ENCODE measurements at regions of chr17 and their contacts with region 1.

Region 1: DNA sequence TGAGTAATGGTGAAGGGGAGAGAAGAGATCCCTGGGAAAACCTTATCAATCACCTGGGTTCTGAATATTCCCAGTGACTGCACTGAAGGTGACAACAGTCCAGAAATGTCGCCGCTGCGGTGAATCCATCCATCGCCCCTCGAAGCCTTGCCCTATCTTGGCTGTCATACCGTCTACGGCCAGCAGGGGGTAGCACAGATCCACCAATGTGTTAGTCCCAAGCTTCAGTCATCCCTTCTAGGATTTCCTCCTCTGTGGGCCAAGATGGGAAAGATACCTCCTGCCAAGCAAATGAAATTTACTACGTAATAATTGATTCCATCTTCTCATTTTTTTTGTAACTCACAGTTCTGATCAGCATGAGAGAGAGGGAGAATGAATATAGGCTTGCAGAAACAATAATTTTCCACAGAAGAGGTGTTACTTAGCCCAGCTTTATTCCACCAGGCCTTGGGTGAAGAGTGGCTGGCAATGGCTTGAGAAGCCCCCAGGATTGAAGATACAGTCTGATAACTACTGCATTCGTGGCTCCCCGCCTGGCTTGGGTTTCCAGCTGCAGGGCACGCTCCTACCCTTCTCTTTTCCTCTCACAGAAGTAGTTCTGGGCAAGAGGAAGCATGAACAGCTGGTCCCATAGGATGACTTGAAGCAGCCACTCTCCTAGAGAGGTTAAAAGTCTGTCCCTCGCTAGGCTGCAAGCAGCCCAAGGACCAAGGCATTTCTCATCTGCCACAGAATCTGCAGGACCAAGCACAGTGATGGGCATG is 2.6 kb upstream of the FMNL1 start:
- DNase-seq: peak; percentile 85 to 87
- ATAC-seq: peak; percentile 61 to 82
- H3K4me3 ChIP-seq: no peak overlapping the region
- H3K27ac ChIP-seq: peak overlapping the region; percentile 97
- H3K4me1 ChIP-seq: peaks cover 37% of the 10 kb centered on the region
- CTCF ChIP-seq: peak; percentile 99
- EP300 ChIP-seq: no peak
- POLR2A ChIP-seq: no peak
- RAD21 ChIP-seq: peak; percentile 99 to 100

Region 2: DNA sequence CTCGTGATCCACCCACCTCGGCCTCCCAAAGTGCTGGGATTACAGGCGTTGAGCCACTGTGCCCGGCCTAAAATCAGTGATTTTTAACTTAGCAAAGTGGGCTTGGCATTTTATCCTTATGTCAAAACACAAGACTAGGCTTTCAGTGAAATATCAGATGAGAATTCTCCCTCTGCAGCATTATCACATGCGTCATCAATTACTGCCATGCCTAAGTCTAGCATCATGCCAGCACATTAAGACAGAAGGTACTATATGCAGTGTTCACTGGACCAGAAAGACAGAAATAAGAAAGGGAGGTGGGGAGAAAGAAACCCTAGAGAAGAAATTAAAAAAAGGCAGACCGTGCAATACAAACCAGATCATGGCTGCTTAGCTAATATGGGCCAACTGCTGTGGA is 745.7 kb before region 1 on chr17:
- CTCF ChIA-PET with region 1: no interaction called
- POLR2A ChIA-PET with region 1: no interaction called
- DNase-seq: no peak
- ATAC-seq: no peak
- H3K4me3 ChIP-seq: no peak overlapping the region
- H3K27ac ChIP-seq: no peak overlapping the region
- H3K4me1 ChIP-seq: no peaks in the 10 kb centered on the region
- CTCF ChIP-seq: no peak
- EP300 ChIP-seq: no peak
- POLR2A ChIP-seq: no peak
- RAD21 ChIP-seq: no peak

Region 3: GRCh38 chr17:45172454-45173286 is 46.4 kb before region 1 on chr17:
- CTCF ChIA-PET with region 1: interaction called, 2,147 read pairs
- POLR2A ChIA-PET with region 1: interaction called, 11 read pairs
- DNase-seq: peak; percentile 90 to 99
- ATAC-seq: peak; percentile 73 to 79
- H3K4me3 ChIP-seq: peak overlapping the region; percentile 36
- H3K27ac ChIP-seq: peak overlapping the region; percentile 96 to 100
- H3K4me1 ChIP-seq: peaks cover 79% of the 10 kb centered on the region
- CTCF ChIP-seq: 0 out of 3 replicates have a peak, but pooled peaks have one; percentile 24
- EP300 ChIP-seq: peak; percentile 86 to 95
- POLR2A ChIP-seq: peak; percentile 46
- RAD21 ChIP-seq: peak; percentile 36 to 75

Region 4: GRCh38 chr17:45284176-45285140 is 65.4 kb after region 1 on chr17:
- CTCF ChIA-PET with region 1: interaction called, 182 read pairs
- POLR2A ChIA-PET with region 1: no interaction called
- DNase-seq: peak in 1 of 2 experiments; percentile 65
- ATAC-seq: peak; percentile 41 to 60; a peak in 4 of 6 replicates
- H3K4me3 ChIP-seq: no peak overlapping the region
- H3K27ac ChIP-seq: peak overlapping the region; percentile 49 to 74; a peak in 5 of 6 replicates
- H3K4me1 ChIP-seq: peaks cover 28% of the 10 kb centered on the region
- CTCF ChIP-seq: peak; percentile 44
- EP300 ChIP-seq: no peak
- POLR2A ChIP-seq: no peak
- RAD21 ChIP-seq: peak; percentile 28 to 34; a peak in 3 of 5 replicates

Region 5: GRCh38 chr17:45307290-45308015 is 88.4 kb after region 1 on chr17:
- CTCF ChIA-PET with region 1: interaction called, 21 read pairs
- POLR2A ChIA-PET with region 1: no interaction called
- DNase-seq: peak in 1 of 2 experiments; percentile 69
- ATAC-seq: peak; percentile 16 to 28; a peak in 5 of 6 replicates
- H3K4me3 ChIP-seq: peak overlapping the region; percentile 10; the same call in 1 of the 3 replicates
- H3K27ac ChIP-seq: peak overlapping the region; percentile 77 to 92
- H3K4me1 ChIP-seq: peaks cover 92% of the 10 kb centered on the region
- CTCF ChIP-seq: no peak
- EP300 ChIP-seq: no peak
- POLR2A ChIP-seq: no peak
- RAD21 ChIP-seq: no peak

Region 6: GRCh38 chr17:45371414-45372327 is 152.6 kb after region 1 on chr17:
- CTCF ChIA-PET with region 1: interaction called, 26 read pairs
- POLR2A ChIA-PET with region 1: no interaction called
- DNase-seq: peak; percentile 98
- ATAC-seq: peak; percentile 93 to 95
- H3K4me3 ChIP-seq: no peak overlapping the region; the same call in 2 of the 3 replicates
- H3K27ac ChIP-seq: peak overlapping the region; percentile 95 to 97
- H3K4me1 ChIP-seq: peaks cover 84% of the 10 kb centered on the region
- CTCF ChIP-seq: no peak; the same call in 1 of the 3 replicates
- EP300 ChIP-seq: peak; percentile 97 to 99
- POLR2A ChIP-seq: no peak; the same call in 1 of the 2 replicates
- RAD21 ChIP-seq: peak; percentile 44 to 71; a peak in 4 of 5 replicates

Region 7: DNA sequence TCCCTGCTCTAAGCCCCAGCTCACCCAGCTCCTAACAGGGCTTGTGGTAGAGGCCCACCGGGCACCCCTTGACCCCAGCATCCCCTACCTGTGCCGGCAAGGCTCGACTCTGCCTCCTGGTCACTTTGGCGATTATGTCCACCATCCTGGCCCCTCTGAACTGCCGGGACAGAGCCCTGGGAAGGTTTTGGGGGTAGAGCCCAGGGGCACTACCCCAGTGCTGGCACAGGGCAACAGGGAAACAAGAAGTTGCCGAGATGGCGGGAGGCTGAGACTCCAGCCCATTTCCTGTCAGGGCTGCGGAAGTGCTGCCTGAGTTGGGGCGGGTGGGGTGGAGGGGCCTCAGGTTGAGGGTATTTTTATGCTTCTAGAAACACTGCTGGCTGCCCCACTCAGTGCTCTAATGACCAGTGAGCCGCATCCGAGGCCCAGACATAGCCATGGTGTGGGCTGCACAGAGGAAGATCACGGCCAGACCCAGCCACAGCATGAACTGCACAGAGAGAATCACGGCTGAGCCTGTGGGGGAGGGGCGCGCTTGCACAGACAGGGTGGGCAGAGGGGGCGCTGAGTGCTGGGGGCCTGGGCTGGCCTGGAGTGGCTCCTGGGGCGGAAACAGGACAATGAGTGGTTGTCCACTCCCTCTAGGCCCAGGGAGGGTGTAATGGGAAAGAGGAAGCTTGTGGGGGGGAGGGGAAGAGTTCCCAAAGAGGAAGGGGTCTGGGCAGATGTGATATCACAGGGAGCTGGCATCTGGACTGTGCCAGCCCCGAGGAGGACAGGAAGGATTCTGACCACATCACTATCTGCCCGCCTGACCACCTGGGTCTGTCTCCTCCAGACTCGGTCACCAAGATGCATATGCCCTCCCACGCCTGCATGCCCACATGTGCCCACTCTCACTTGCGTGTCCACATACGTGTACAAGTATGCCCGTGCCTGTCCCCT is 191.3 kb after region 1 on chr17:
- CTCF ChIA-PET with region 1: interaction called, 14 read pairs
- POLR2A ChIA-PET with region 1: no interaction called
- DNase-seq: no peak
- ATAC-seq: no peak
- H3K4me3 ChIP-seq: no peak overlapping the region
- H3K27ac ChIP-seq: no peak overlapping the region
- H3K4me1 ChIP-seq: peaks cover 45% of the 10 kb centered on the region
- CTCF ChIP-seq: no peak
- EP300 ChIP-seq: no peak
- POLR2A ChIP-seq: no peak
- RAD21 ChIP-seq: no peak